Left lung (tissue), 14 donors: ENCODE measurements at regions of chr1 and their contacts with region 1.

Region 1: DNA sequence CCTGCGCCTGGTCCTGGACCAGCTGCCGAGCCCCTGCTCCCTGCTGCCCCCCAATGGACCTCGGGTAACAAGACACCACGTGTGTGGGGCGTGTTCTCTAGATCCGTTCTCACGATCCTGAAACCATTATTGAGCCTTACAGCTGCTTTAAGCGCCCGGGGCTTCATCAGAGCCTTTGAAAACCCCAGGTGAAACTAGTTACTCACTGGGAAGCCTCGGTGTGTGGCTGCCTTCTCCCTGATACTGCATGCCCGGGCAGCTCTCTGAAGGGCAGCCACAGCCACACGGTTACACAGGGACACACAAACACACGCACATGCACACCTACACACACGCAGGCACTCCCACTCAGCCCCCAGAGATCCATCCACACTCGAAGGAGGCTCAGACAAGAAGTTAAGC is 5.3 kb downstream of the HES2 start:
- DNase-seq: no peak
- ATAC-seq: peak; percentile 63
- H3K4me3 ChIP-seq: no peak overlapping the region
- H3K27ac ChIP-seq: no peak overlapping the region
- H3K4me1 ChIP-seq: peaks cover 6 to 8% of the 10 kb centered on the region in 2 donors
- H3K27me3 ChIP-seq: peaks cover 38 to 98% of the 10 kb centered on the region in 2 donors
- CTCF ChIP-seq: no peak

Region 2: DNA sequence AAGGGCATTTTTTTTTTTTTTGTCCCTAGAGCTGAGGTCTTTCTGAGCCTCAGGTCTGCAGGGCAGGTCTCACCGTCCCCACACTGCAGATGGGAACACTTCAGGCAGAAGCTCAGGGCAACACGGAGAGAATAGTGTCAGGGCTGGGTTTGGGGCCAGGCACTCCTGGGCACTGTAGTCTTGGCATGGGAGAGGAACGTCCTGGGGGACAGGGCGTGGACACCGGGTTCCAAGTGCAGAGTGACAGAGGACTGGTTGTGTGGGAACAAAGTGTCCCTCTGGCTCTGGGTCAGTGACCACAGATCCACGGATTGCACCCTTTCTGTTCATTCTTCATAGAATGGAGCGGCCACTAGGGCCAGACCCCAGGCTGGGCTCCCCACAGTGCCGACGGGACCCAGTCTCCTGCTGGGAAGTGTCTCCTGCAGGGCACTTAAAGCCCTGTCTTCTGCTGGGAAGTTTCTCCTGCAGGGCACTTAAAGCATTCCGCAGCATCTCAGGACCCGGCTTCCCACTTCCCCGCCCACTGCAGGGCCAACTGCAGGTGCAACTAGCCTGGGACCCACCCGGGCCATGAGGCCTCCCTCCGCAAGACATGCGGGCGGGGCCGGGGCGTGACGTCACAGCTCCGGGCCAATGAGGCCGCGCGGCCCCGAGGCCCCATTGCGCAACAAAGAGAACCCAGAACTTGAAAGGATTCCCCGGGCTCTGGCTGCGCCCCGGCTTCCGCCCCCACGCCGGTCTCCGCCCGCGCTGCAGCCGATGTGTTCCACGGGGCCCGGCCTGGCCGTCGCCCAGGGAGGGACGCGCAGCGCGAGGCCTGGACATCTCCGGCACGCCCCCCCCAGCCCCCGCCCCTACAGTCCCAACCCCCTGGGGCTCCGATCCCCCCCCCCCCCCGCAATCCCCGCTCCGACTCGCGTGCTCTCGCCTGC is 154.7 kb before region 1 on chr1:
- intact Hi-C with region 1: loop called in 1 of 2 experiments (anchors 10 kb)
- DNase-seq: peak; percentile 76 to 92 (median 88)
- ATAC-seq: peak; percentile 78
- H3K4me3 ChIP-seq: peak overlapping the region; percentile 52 to 61
- H3K27ac ChIP-seq: no peak overlapping the region
- H3K4me1 ChIP-seq: peaks cover 6 to 26% of the 10 kb centered on the region in 2 donors
- H3K27me3 ChIP-seq: peaks cover 0 to 69% of the 10 kb centered on the region in 2 donors
- CTCF ChIP-seq: no peak